Activated B cell treated with CpG ODN at 0.5 μM for 24 hours (primary cell): ENCODE measurements at regions of chr19 and their contacts with region 1.

Region 1: DNA sequence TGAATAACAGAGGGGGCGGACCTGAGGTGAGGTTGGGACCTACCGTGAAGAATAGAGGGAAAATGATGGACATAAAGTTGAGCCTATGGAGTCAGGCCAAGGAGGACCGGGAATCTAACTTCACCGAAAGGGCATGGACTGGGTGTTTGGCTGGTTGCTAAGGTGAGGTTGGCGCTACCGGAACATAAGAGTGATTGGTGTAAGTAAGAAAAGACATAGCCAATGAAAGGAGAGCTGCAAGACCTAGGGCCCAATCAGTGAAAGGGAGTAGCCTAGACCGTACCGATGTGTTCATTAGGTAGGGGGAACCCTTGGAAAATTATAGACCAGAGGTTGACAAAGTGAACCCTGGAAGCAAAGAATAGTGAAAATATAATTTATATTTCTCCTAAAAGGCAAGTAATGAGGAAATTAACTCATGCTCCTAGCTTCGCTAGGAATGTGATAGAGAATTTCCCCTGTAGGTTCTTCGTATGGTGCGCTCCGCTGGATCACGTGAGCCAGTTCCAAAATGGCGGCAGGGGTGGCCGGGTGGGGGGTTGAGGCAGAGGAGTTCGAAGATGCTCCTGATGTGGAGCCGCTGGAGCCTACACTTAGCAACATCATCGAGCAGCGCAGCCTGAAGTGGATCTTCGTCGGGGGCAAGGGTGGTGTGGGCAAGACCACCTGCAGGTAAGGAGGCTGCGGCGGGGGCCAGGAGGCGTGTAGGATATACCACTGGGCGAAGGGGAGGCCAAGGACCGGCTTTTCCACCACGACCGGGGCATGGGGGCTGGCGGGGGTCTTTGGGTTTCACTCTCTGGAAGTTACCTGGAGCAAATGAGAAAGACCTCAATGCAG is at the start of gene GET3:
- DNase-seq: peak; percentile 66
- ATAC-seq: peak; percentile 79
- H3K4me3 Mint-ChIP-seq: peak within 1 kb of the TSS; percentile 99
- H3K27ac Mint-ChIP-seq: peak within 1 kb of the TSS; percentile 95
- H3K4me1 Mint-ChIP-seq: peaks cover 40% of the 10 kb centered on the region
- H3K27me3 Mint-ChIP-seq: no peaks in the 10 kb centered on the region
- CTCF ChIP-seq: no peak
- total RNA-seq, gene GET3: 59.6 and 63.5 TPM in 2 replicates

Region 2: GRCh38 chr19:12564016-12564664 is 173.1 kb before region 1 on chr19:
- CTCF ChIA-PET with region 1: no interaction called
- POLR2A ChIA-PET with region 1: no interaction called
- intact Hi-C with region 1: no loop called
- DNase-seq: peak; percentile 91
- ATAC-seq: peak; percentile 100
- H3K4me3 Mint-ChIP-seq: no peak overlapping the region
- H3K27ac Mint-ChIP-seq: no peak overlapping the region
- H3K4me1 Mint-ChIP-seq: peaks cover 6% of the 10 kb centered on the region
- H3K27me3 Mint-ChIP-seq: no peaks in the 10 kb centered on the region
- CTCF ChIP-seq: no peak

Region 3: GRCh38 chr19:12603714-12604113 is 133.5 kb before region 1 on chr19:
- CTCF ChIA-PET with region 1: no interaction called
- POLR2A ChIA-PET with region 1: no interaction called
- intact Hi-C with region 1: no loop called
- DNase-seq: no peak
- ATAC-seq: peak; percentile 80
- H3K4me3 Mint-ChIP-seq: no peak overlapping the region
- H3K27ac Mint-ChIP-seq: peak overlapping the region; percentile 56
- H3K4me1 Mint-ChIP-seq: peaks cover 24% of the 10 kb centered on the region
- H3K27me3 Mint-ChIP-seq: no peaks in the 10 kb centered on the region
- CTCF ChIP-seq: no peak

Region 4: DNA sequence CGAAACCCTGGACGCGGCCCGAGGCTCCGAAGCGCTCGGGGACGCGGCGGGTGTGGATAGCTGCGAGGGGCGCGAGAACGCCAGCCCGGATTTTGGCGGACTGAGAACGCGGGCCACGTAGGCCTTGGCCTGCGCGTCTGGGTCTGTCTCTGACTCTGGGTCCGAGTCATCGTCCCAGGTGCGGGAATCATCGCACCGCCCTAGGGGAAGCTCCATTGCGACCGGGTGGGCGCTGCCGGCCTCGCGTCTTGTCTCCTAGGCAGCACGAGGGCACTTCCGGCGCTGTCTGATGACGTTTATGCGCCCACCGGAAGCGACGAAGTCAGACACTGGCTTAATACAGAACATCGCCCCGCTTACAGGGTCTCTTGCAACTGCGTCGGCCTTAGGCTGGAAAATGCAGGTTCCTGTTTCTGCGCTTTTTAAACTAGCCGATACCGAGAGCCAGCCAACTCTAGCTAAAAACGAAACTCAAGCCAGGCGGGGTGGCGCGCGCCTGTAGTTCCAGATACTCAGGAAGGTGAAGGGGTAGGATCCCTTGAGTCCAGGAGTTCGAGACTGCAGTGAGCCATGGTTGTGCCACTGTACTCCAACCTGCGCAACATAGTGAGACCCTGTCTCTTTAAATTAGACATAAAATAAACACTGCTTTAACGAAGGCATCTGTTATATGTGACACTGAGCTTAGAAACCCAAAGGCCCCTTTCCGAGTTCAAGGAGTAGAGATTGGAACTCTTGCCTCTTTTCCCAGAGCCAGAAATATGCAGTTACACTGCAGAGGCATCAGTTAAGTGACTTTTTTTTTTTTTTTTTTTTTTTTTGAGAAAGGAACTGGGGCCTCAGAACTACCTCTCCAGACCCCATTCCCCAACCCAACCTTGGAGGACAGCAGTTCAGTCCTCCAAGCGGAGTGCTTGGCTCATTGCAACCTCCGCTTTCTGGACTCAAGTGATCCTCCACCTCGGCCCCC is 40.6 kb before region 1 on chr19 and contains the start of gene FBXW9:
- CTCF ChIA-PET with region 1: no interaction called
- POLR2A ChIA-PET with region 1: interaction called, 15 read pairs
- intact Hi-C with region 1: loop called (anchors 1 kb)
- DNase-seq: peak; percentile 98
- ATAC-seq: peak; percentile 88
- H3K4me3 Mint-ChIP-seq: peak within 1 kb of the TSS; percentile 91
- H3K27ac Mint-ChIP-seq: peak within 1 kb of the TSS; percentile 97
- H3K4me1 Mint-ChIP-seq: peaks cover 11% of the 10 kb centered on the region
- H3K27me3 Mint-ChIP-seq: no peaks in the 10 kb centered on the region
- CTCF ChIP-seq: no peak
- total RNA-seq, gene FBXW9: 4.7 and 5.2 TPM in 2 replicates

Region 5: DNA sequence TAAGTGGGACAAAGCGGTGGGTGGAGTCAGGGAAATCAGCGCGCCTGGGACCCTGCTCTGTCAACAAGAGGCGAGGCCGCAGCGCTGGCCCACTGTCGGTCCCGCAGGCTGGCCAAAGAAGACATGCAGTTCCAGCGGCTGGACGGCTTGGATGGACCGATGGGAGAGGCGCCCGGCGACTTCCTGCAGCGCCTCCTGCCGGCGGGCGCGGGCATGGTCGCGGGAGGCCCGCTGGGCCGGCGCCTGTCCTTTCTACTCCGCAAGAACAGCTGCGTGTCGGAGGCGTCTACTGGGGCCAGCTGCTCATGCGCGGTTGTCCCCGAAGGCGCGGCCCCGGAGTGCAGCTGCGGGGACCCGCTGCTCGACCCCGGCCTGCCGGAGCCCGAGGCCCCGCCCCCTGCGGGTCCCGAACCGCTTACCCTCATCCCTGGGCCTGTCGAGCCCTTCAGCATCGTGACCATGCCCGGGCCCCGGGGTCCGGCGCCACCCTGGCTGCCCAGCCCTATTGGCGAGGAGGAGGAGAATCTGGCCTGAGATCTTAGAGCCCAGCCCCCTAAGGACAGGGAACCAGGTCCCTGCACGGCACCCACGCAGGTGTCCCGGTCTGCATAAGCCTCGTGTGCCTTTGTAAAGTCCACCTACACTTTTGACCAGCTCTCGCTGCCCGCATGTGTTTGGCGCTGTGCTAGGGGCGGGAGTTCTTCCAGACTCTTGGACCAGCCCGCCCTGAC is 20.5 kb after region 1 on chr19:
- CTCF ChIA-PET with region 1: interaction called, 12 read pairs
- POLR2A ChIA-PET with region 1: interaction called, 4 read pairs
- intact Hi-C with region 1: no loop called
- DNase-seq: peak; percentile 69
- ATAC-seq: peak; percentile 75
- H3K4me3 Mint-ChIP-seq: no peak overlapping the region
- H3K27ac Mint-ChIP-seq: no peak overlapping the region
- H3K4me1 Mint-ChIP-seq: peaks cover 10% of the 10 kb centered on the region
- H3K27me3 Mint-ChIP-seq: peaks cover 22% of the 10 kb centered on the region
- CTCF ChIP-seq: peak; percentile 70

Region 6: GRCh38 chr19:12796146-12797071 is 59.2 kb after region 1 on chr19:
- CTCF ChIA-PET with region 1: interaction called, 3 read pairs
- POLR2A ChIA-PET with region 1: interaction called, 25 read pairs
- intact Hi-C with region 1: no loop called
- DNase-seq: peak; percentile 63
- ATAC-seq: no peak
- H3K4me3 Mint-ChIP-seq: peak overlapping the region; percentile 81
- H3K27ac Mint-ChIP-seq: peak overlapping the region; percentile 80
- H3K4me1 Mint-ChIP-seq: peaks cover 34% of the 10 kb centered on the region
- H3K27me3 Mint-ChIP-seq: no peaks in the 10 kb centered on the region
- CTCF ChIP-seq: peak; percentile 37

Region 7: DNA sequence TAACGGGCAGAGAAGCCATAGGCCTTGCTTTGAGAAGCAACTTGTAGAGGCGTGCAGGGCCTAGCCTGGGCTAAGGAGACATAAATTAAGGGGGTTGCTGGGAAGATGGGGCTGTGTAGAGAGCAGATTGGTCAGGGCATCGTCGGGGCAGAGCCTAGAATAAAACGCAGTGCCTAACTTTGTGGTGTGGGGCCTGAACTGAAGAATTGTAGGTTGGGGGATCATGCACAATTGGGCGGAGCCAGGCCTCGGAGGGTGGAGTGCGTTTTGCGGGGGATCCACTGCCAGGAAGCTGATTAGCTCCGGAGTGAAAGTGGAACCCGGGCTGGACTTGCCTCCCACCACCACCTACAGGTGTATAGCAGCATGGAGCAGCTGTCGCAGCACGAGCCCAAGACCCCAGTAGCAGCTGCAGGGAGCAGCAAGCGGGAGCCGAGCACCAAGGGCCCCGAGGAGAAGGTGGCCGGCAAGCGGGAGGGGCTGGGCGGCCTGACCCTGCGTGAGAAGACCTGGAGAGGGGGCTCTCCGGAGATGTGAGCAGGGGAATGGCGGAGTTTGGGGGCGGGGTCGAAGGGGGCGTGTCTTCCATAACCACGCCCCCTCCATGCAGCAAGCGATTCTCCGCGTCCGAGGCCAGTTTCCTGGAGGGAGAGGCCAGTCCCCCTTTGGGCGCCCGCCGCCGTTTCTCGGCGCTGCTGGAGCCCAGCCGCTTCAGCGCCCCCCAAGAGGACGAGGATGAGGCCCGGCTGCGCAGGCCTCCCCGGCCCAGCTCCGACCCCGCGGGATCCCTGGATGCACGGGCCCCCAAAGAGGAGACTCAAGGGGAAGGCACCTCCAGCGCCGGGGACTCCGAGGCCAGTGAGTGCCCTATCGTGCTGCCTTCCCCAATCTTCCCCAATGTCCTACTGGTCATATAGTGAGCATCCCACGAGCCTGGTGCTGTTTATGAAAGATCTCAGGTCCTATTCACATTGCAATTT is 130.2 kb after region 1 on chr19:
- CTCF ChIA-PET with region 1: no interaction called
- POLR2A ChIA-PET with region 1: interaction called, 10 read pairs
- intact Hi-C with region 1: no loop called
- DNase-seq: peak; percentile 74
- ATAC-seq: peak; percentile 89
- H3K4me3 Mint-ChIP-seq: peak overlapping the region; percentile 85
- H3K27ac Mint-ChIP-seq: peak overlapping the region; percentile 14
- H3K4me1 Mint-ChIP-seq: peaks cover 13% of the 10 kb centered on the region
- H3K27me3 Mint-ChIP-seq: peaks cover 2% of the 10 kb centered on the region
- CTCF ChIP-seq: no peak